Breast epithelium (tissue), 4 donors: ENCODE measurements at regions of chr22 and their contacts with region 1.

Region 1: GRCh38 chr22:19970479-19971275 is 29.1 kb upstream of the TXNRD2 start:
- DNase-seq: peak in 1 of 2 donors; percentile 70
- H3K4me3 ChIP-seq: no peak overlapping the region
- H3K27ac ChIP-seq: peak overlapping the region in 1 of 2 donors; percentile 40
- H3K4me1 ChIP-seq: no peaks in the 10 kb centered on the region
- H3K27me3 ChIP-seq: no peaks in the 10 kb centered on the region
- CTCF ChIP-seq: peak; percentile 69 to 86 (median 69)
- POLR2A ChIP-seq: no peak

Region 2: DNA sequence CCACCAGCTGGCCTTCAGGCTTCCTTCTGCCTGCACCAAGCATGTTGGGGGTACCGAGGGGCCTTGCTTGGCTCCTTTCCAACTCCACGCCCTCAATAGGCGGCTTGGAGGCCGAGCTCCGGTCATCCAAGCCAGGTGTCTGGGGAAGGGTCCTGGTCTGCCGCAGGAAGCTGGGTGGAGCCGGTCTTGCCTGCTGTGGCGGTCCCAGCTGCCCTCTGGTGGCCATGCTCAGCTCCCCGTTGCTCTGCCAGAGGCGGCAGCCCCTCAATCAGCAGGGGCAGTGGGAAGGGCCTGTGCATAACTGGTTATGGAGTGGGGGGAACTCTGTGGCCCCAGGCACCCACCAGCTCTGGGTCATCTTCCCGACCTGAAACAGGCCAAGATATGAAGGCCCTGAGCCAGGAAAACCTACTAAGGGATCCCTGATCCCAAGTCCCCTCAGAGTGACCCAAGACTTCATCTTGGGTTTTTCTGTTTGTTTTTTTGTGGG is 42.8 kb after region 1 on chr22:
- intact Hi-C with region 1: loop called (anchors 5 kb)
- DNase-seq: no peak
- H3K4me3 ChIP-seq: no peak overlapping the region
- H3K27ac ChIP-seq: no peak overlapping the region
- H3K4me1 ChIP-seq: peaks cover 0 to 10% of the 10 kb centered on the region in 2 donors
- H3K27me3 ChIP-seq: no peaks in the 10 kb centered on the region
- CTCF ChIP-seq: peak; percentile 26 to 72 (median 44)
- POLR2A ChIP-seq: no peak